ENCODE measurements at regions of chr9 and their contacts with region 1.

Region 1: DNA sequence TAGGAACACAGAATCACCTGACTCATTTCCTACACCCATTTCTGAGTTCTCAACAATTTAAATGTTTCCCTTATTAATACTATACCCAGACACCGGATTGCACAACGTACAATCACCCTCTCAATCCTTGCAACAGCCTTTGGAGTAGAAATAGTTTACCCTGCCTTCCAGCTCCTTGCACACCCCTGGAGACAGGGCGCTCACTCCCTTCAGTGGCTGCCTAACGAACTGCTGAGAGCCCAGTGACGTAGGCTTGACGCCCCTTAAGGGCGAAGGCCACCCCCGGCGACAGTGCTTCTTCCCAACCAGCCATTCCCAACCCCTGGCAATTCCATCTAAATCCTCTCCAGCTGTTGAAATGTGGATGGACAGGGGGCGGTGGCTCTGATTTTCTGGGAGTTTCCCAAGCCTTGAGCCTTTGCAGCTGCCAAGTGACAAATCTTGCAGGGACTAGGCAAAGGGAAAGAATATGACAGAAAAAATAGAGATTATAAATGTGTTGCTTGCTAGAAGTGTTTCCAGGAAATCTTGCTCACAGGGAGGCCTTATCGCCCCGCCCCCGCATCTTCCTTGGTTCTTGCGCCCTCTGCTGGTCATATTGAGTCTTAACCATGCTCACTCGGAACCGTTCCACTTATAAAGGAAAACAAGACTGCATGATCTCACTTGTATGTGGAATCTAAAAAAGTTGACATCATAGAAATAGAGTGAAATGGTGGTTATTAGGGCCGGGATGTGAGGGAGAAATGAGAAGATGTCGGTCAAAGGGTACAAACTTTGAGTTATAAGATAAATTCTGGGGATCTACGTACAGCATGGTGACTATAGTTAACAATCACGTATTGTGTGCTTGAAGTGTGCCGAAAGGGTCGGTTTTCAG is 7.6 kb upstream of the BARX1 start:
- DNase-seq: peak; percentile 51
- ATAC-seq: peak; percentile 43
- H3K4me3 Mint-ChIP-seq: no peak overlapping the region
- H3K27ac Mint-ChIP-seq: no peak overlapping the region
- H3K4me1 Mint-ChIP-seq: peaks cover 27% of the 10 kb centered on the region
- H3K27me3 Mint-ChIP-seq: peaks cover 47% of the 10 kb centered on the region
- CTCF ChIP-seq: peak; percentile 49

Region 2: GRCh38 chr9:92954049-92954861 is 1008.5 kb before region 1 on chr9:
- CTCF ChIA-PET with region 1: no interaction called
- POLR2A ChIA-PET with region 1: no interaction called
- intact Hi-C with region 1: loop called (anchors 1 kb)
- DNase-seq: no peak
- ATAC-seq: peak; percentile 66
- H3K4me3 Mint-ChIP-seq: peak overlapping the region; percentile 49
- H3K27ac Mint-ChIP-seq: no peak overlapping the region
- H3K4me1 Mint-ChIP-seq: peaks cover 20% of the 10 kb centered on the region
- H3K27me3 Mint-ChIP-seq: peaks cover 17% of the 10 kb centered on the region
- CTCF ChIP-seq: no peak

Region 3: DNA sequence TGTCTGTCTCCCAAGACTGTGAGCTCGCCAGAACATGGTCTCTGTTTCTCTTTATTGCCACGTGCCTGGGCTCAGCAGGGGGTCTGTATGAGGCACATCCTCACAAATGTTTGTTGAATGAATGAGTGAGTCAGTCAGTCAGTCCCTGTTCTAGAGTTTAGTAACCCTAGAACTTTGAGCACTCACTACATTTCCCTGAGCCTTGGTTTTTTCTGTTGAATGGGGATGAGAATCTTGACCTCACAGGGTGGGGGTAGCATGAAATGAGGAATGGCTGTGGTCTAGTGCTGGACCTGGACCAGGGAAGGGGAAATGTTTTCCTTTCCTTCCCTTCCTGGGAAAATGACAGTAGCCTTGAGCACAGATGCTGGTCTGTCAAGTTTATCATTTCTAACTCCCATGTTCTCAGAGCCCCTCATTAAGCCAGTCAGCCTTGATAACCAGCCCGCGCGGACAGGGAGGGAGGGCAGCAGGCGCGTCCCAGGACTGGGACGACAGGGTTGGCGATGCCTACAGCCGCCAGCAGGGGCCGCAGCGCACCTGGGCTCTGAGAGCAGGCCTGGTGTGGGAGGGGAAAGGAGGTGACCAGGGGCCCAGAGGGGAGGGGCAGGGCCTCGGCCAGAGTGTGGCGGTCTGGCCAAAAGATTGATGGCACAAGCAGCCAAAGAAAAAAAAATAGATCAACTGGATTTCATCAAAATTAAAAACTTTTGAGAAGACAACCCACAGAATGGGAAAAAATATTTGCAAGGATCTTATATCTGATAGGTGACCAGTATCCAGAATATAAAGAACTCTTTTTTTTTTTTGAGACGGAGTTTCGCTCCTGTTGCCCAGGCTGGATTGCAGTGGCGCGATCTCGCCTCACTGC is 803.0 kb before region 1 on chr9:
- CTCF ChIA-PET with region 1: no interaction called
- POLR2A ChIA-PET with region 1: no interaction called
- intact Hi-C with region 1: loop called (anchors 1 kb)
- DNase-seq: peak; percentile 70
- ATAC-seq: peak; percentile 98
- H3K4me3 Mint-ChIP-seq: no peak overlapping the region
- H3K27ac Mint-ChIP-seq: no peak overlapping the region
- H3K4me1 Mint-ChIP-seq: peaks cover 7% of the 10 kb centered on the region
- H3K27me3 Mint-ChIP-seq: no peaks in the 10 kb centered on the region
- CTCF ChIP-seq: peak; percentile 88

Region 4: GRCh38 chr9:93682232-93682968 is 280.4 kb before region 1 on chr9:
- CTCF ChIA-PET with region 1: interaction called, 35 read pairs
- POLR2A ChIA-PET with region 1: no interaction called
- intact Hi-C with region 1: loop called (anchors 1 kb)
- DNase-seq: peak; percentile 48
- ATAC-seq: peak; percentile 71
- H3K4me3 Mint-ChIP-seq: no peak overlapping the region
- H3K27ac Mint-ChIP-seq: no peak overlapping the region
- H3K4me1 Mint-ChIP-seq: no peaks in the 10 kb centered on the region
- H3K27me3 Mint-ChIP-seq: peaks cover 11% of the 10 kb centered on the region
- CTCF ChIP-seq: no peak

Region 5: GRCh38 chr9:94110821-94111252 is 148.0 kb after region 1 on chr9:
- CTCF ChIA-PET with region 1: no interaction called
- POLR2A ChIA-PET with region 1: no interaction called
- intact Hi-C with region 1: no loop called
- DNase-seq: no peak
- ATAC-seq: no peak
- H3K4me3 Mint-ChIP-seq: no peak overlapping the region
- H3K27ac Mint-ChIP-seq: no peak overlapping the region
- H3K4me1 Mint-ChIP-seq: no peaks in the 10 kb centered on the region
- H3K27me3 Mint-ChIP-seq: no peaks in the 10 kb centered on the region
- CTCF ChIP-seq: no peak

Region 6: DNA sequence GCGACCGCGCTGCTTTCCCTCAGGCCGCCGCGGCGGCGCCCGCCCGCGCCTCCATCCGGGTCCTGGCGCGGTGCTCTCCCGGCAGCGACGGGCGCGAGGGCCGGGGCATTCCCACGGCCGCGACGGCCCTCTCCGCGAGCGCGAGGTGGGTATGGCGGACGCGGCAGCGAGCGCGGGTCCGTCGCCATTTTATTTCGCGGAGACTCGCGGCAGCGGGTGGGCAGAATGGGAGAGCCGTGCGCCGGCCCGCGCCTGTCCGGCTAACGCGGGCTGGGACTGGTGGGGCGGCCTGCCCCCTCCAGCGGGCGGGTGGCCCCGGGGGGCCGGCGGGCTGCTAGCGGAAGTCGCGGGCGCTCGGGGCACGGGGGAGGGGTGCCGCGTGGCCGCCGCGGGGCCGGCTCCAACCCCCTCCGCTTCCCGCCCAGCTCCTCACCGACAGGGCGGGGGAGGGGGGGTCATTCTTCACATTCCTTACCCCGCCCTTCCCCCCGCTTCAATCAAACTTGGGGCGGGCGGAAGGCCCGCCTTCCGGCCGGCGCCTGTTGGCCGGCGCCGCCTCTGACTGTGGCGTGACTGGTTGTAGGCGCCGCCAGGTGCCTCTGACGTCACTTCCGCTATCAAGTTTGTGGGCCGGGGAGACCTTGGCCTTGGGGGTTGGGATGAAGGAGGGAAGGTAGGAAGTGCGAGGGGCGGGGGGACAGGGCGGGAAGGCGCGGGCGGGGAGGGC is 203.6 kb after region 1 on chr9:
- CTCF ChIA-PET with region 1: no interaction called
- POLR2A ChIA-PET with region 1: no interaction called
- intact Hi-C with region 1: loop called (anchors 2 kb)
- DNase-seq: peak; percentile 85
- ATAC-seq: peak; percentile 63
- H3K4me3 Mint-ChIP-seq: peak overlapping the region; percentile 89
- H3K27ac Mint-ChIP-seq: peak overlapping the region; percentile 87
- H3K4me1 Mint-ChIP-seq: peaks cover 49% of the 10 kb centered on the region
- H3K27me3 Mint-ChIP-seq: no peaks in the 10 kb centered on the region
- CTCF ChIP-seq: no peak

Measured in activated B cell treated with CpG ODN at 0.5 μM for 24 hours (primary cell).